Transverse colon (tissue), 4 donors: ENCODE measurements at regions of chr3 and their contacts with region 1.

Region 1: DNA sequence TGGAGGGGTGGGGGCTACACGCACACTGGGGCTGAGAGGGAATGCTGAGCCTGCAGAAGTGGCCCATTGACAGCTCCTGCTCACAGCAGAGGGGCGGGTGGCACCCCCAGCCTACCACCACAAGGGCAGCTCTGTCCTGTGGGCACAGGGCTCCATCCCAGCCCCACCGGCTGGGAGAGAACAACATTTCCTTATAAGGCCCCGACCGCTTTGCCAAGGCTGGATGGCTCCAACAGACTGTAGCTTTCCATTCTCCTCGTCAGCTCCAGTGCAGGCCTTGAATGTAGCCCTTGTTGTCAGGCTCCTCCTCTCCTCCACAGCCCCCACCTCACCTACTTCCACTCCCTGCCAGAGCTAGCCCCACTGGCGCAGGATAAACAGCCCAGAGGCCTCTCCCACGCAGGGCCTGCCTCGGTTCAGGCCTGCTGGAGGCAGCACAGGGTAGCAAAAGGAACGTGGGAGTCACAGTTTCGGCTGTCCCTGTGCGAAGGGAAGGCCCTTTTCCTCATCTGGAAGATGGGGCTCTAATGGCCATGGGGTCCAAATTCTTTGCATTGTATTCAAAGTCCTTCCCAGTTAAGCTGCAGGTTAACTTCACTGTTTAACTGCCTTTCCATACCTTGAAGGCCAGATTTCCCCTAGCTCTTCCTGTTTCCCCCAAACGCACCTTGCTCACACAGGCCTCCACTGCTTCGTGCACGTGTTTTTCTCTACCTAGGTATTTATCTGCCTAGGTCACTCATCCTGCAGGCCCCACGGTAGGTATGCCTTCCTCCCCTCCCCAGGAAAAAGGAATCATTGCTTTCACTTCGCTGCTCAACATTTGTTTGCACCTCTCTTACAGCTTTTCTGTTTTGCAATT is 101.6 kb upstream of the LPP start:
- DNase-seq: peak; percentile 70
- H3K4me3 ChIP-seq: no peak overlapping the region
- H3K27ac ChIP-seq: peak overlapping the region; percentile 75 to 85 (median 80)
- H3K4me1 ChIP-seq: peaks cover 0 to 13% (median 11%) of the 10 kb centered on the region in 4 donors
- H3K27me3 ChIP-seq: no peaks in the 10 kb centered on the region
- CTCF ChIP-seq: peak; percentile 20 to 57 (median 30)
- EP300 ChIP-seq: peak; percentile 41
- POLR2A ChIP-seq: no peak

Region 2: DNA sequence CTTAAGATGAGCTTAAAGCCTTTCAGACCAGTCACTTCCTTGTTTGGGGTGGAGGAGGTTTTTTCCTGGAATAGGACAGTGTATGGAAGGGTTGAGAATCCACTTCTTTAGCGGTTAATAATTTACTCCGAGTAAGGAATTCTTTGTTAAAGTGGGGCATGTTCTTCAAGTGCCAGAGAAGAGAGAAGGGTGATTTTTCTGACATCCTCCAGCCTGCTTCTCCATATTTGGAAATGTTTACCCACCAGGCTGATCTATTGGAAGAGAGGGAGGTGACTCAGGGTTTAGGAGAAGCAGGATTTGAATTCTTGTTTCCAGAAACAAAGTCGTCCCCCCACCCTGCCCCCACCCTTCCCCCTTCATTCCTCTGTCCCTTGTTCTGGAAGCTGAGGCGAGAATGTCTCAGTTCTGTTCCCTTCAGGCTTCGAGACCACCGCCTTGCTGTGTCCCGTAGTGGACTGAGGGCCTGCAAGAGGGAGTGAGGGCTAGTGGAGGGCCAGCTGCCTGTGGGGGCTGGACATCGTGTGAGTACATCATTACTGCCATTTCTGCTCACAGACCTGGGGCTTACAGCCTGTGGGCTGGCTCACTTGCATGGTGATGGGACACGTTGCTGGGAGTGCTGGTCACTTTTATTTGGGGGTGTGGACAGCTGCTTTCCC is 160.0 kb after region 1 on chr3:
- in situ Hi-C with region 1: no loop called
- intact Hi-C with region 1: loop called (anchors 10 kb)
- DNase-seq: no peak
- H3K4me3 ChIP-seq: peak overlapping the region in 3 of 4 donors; percentile 8 to 36 (median 29)
- H3K27ac ChIP-seq: peak overlapping the region; percentile 85 to 92 (median 86)
- H3K4me1 ChIP-seq: peaks cover 26 to 51% (median 49%) of the 10 kb centered on the region in 4 donors
- H3K27me3 ChIP-seq: no peaks in the 10 kb centered on the region
- CTCF ChIP-seq: no peak
- EP300 ChIP-seq: peak; percentile 69
- POLR2A ChIP-seq: peak; percentile 38

Region 3: DNA sequence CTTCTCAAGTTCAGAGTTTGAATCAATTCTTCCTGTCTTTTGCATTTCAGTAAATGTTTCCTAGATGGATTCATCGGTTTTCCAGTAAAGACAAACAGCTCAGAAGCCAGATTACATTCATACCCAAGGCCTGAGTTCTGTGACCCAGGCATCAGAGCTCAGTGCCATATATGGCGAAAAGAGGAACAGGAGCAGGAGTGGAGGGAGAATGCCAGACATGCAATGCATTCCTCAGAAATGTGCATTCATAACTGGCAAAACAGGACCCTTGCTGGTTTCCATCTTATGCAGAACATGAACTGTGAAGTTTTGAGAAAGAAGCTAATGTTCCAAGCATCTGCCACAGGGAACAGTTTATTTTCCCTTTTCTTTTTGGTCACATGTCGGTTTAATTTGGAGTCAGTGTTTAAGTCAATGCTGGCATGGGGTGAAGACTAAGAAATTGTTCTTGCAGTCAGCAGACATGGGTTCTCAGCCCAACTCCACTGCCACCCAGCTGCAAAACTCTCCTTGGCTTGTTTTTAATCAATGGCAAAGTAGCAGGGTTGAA is 218.1 kb after region 1 on chr3:
- in situ Hi-C with region 1: no loop called
- intact Hi-C with region 1: loop called (anchors 10 kb)
- DNase-seq: no peak
- H3K4me3 ChIP-seq: no peak overlapping the region
- H3K27ac ChIP-seq: peak overlapping the region; percentile 82 to 90 (median 86)
- H3K4me1 ChIP-seq: peaks cover 36 to 90% (median 61%) of the 10 kb centered on the region in 4 donors
- H3K27me3 ChIP-seq: no peaks in the 10 kb centered on the region
- CTCF ChIP-seq: no peak
- EP300 ChIP-seq: peak; percentile 82
- POLR2A ChIP-seq: no peak

Region 4: DNA sequence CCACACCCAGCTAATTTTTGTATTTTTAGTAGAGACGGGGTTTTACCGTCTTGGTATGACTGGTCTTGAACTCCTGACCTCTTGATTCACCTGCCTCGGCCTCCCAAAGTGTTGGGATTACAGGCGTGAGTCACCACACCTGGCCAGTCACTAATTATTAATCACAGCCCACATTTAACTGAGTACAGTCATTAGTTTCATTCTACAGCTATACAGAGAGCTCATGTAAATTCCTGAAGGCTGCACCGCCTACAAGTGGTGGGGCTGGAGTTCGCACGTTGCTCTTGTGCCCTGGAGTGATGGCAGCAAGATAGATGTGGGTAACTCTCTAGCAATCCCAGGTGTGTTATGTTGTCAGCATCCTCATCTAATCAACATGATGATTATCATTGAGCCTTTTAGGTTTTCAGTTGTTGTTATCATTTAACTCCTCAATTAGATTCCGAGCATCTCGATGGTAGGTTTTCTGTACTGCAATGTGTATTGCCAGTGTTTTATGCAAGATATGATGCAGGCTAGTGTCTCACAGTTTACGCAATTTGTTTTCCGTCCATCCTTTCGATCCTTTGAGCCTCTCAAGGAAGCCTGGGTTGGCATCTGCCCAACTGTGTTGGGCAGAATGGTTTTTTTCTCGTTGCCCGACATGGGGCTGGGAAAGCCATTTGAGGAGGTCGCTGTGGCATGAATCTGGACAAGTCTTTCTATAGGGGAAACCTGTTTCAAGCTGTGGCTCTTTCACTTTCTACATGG is 317.9 kb after region 1 on chr3:
- in situ Hi-C with region 1: no loop called
- intact Hi-C with region 1: loop called (anchors 5 kb)
- DNase-seq: no peak
- H3K4me3 ChIP-seq: no peak overlapping the region
- H3K27ac ChIP-seq: peak overlapping the region in 3 of 4 donors; percentile 2 to 33 (median 6)
- H3K4me1 ChIP-seq: peaks cover 0 to 15% (median 5%) of the 10 kb centered on the region in 4 donors
- H3K27me3 ChIP-seq: no peaks in the 10 kb centered on the region
- CTCF ChIP-seq: no peak
- EP300 ChIP-seq: no peak
- POLR2A ChIP-seq: no peak

Region 5: DNA sequence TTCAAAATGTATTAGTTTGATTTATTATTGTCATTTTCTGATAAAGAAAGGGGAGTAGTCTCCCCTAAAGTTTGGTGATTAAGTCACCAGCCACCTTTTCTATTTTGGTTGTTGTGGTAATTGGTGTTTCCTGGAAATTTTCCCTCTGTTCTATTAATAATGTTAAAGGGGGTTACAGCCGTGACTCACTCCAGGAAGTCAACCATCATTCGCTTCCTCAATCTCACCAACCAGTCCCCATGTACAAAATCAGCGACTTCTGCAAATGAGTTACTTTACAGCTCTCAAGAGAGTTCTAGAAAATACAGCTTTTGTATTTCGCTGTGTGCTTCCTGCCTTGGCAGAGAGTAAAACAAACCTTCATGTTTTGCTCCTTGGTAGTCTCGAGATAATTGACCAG is 386.7 kb after region 1 on chr3:
- in situ Hi-C with region 1: no loop called
- intact Hi-C with region 1: no loop called
- DNase-seq: no peak
- H3K4me3 ChIP-seq: no peak overlapping the region
- H3K27ac ChIP-seq: peak overlapping the region in 2 of 4 donors; percentile 12 to 15
- H3K4me1 ChIP-seq: peaks cover 0 to 24% (median 3%) of the 10 kb centered on the region in 4 donors
- H3K27me3 ChIP-seq: no peaks in the 10 kb centered on the region
- CTCF ChIP-seq: no peak
- EP300 ChIP-seq: no peak
- POLR2A ChIP-seq: no peak

Region 6: GRCh38 chr3:188954590-188955208 is 902.3 kb after region 1 on chr3:
- in situ Hi-C with region 1: loop called in 1 of 4 experiments (anchors 25 kb)
- intact Hi-C with region 1: loop called (anchors 5 kb)
- DNase-seq: peak; percentile 87
- H3K4me3 ChIP-seq: no peak overlapping the region
- H3K27ac ChIP-seq: peak overlapping the region in 1 of 4 donors; percentile 13
- H3K4me1 ChIP-seq: peaks cover 2 to 22% (median 18%) of the 10 kb centered on the region in 4 donors
- H3K27me3 ChIP-seq: no peaks in the 10 kb centered on the region
- CTCF ChIP-seq: peak; percentile 88 to 96 (median 93)
- EP300 ChIP-seq: no peak
- POLR2A ChIP-seq: no peak